Endothelial cell of umbilical vein (primary cell): ENCODE measurements at regions of chr4 and their contacts with region 1.

Region 1: DNA sequence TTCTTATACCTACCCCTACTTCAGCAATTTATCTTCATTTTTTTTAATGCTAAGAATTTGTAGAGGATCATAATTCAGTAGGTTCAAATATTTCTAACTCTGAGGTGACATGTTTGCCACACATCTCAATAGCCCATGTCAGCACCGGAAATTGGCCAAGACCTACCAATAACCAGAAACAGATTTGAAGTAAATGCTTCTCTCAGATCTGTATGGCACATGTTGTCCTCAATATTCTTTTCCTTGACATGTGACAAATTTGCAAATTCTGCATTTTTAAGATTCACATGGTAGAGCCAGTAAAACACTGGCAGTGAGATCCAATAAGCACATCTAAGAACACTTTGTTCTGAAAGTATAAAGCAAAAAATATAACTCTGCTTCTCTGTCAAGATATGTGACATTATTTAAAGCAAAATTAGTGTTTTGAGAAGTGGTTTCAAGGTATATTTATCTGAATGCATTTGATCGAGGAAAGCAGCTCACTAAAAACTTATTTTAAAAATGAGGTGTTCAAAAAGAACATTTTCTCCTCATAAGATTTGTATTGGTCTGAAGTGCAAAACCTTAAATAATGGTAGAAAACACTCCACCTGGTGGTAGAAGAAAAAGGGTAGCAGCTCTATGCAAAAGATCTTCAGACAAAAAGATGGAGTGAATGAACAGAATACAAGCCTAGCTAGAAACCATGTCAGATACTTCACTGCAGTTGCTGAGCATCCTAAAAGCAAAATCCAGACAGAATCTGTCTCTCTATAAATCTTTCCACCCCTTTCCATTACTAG is 513.8 kb upstream of the FAM241A start:
- DNase-seq: peak; percentile 27
- H3K4me3 ChIP-seq: no peak overlapping the region
- H3K27ac ChIP-seq: no peak overlapping the region
- H3K4me1 ChIP-seq: no peaks in the 10 kb centered on the region
- H3K27me3 ChIP-seq: peaks cover 0 to 8% of the 10 kb centered on the region in 2 experiments
- CTCF ChIP-seq: peak; percentile 24 to 48
- POLR2A ChIP-seq: no peak

Region 2: GRCh38 chr4:109998867-109999584 is 1632.4 kb before region 1 on chr4:
- CTCF ChIA-PET with region 1: interaction called, 5 read pairs
- POLR2A ChIA-PET with region 1: no interaction called
- dilution Hi-C with region 1: no loop called
- intact Hi-C with region 1: loop called (anchors 2 kb)
- DNase-seq: peak; percentile 59
- H3K4me3 ChIP-seq: no peak overlapping the region
- H3K27ac ChIP-seq: no peak overlapping the region
- H3K4me1 ChIP-seq: no peaks in the 10 kb centered on the region
- H3K27me3 ChIP-seq: peaks cover 11 to 16% of the 10 kb centered on the region in 2 experiments
- CTCF ChIP-seq: peak; percentile 39 to 44
- POLR2A ChIP-seq: no peak

Region 3: DNA sequence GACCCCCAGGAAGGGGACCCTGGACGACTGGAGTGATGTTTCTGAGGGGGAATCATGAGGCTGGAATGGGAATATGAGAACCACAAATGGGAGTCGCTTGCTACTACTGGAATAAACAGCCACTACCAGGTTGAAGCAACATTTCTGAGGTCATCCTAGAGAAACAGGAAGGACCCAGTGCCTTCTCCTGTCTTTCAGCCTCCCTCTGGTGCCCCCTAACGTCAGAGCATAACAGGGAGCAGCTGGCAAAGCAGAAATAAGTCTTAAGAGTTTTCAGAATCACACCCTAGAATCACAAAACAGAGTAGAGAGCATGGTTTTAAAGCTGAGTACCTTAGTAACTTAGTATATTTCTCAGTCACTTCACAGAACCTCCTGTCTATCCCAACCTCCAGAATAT is 660.8 kb before region 1 on chr4:
- CTCF ChIA-PET with region 1: no interaction called
- POLR2A ChIA-PET with region 1: no interaction called
- dilution Hi-C with region 1: no loop called
- intact Hi-C with region 1: loop called (anchors 2 kb)
- DNase-seq: peak; percentile 6
- H3K4me3 ChIP-seq: no peak overlapping the region
- H3K27ac ChIP-seq: no peak overlapping the region
- H3K4me1 ChIP-seq: no peaks in the 10 kb centered on the region
- H3K27me3 ChIP-seq: peaks cover 0 to 4% of the 10 kb centered on the region in 2 experiments
- CTCF ChIP-seq: peak; percentile 30 to 44
- POLR2A ChIP-seq: no peak

Region 4: DNA sequence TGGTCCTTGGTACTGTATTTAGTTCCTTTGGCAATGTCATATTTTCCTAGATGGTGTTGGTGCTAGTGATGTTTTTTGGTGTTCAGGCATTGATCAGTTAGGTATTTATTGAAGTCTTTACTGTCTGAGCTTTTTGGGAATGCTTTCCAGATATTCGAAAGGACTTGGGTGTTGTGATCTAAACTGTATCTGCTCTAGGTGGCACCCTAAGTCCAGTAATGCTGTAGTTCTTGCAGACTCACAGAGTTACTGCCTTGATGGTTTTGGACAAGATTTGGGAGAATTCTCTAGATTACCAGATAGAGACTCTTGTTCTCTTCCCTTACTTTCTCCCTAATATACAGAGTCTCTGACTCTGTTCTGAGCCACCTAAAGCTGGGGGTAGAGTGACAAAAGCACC is 495.0 kb before region 1 on chr4:
- CTCF ChIA-PET with region 1: interaction called, 36 read pairs
- POLR2A ChIA-PET with region 1: no interaction called
- dilution Hi-C with region 1: no loop called
- intact Hi-C with region 1: loop called (anchors 10 kb)
- DNase-seq: peak; percentile 19
- H3K4me3 ChIP-seq: no peak overlapping the region
- H3K27ac ChIP-seq: no peak overlapping the region
- H3K4me1 ChIP-seq: no peaks in the 10 kb centered on the region
- H3K27me3 ChIP-seq: no peaks in the 10 kb centered on the region
- CTCF ChIP-seq: peak in 1 of 2 donors; percentile 11
- POLR2A ChIP-seq: no peak

Region 5: GRCh38 chr4:111283061-111283677 is 348.2 kb before region 1 on chr4:
- CTCF ChIA-PET with region 1: interaction called, 25 read pairs
- POLR2A ChIA-PET with region 1: no interaction called
- dilution Hi-C with region 1: no loop called
- intact Hi-C with region 1: loop called (anchors 1 kb)
- DNase-seq: peak; percentile 58
- H3K4me3 ChIP-seq: no peak overlapping the region
- H3K27ac ChIP-seq: no peak overlapping the region
- H3K4me1 ChIP-seq: no peaks in the 10 kb centered on the region
- H3K27me3 ChIP-seq: no peaks in the 10 kb centered on the region
- CTCF ChIP-seq: peak; percentile 77 to 85
- POLR2A ChIP-seq: no peak

Region 6: DNA sequence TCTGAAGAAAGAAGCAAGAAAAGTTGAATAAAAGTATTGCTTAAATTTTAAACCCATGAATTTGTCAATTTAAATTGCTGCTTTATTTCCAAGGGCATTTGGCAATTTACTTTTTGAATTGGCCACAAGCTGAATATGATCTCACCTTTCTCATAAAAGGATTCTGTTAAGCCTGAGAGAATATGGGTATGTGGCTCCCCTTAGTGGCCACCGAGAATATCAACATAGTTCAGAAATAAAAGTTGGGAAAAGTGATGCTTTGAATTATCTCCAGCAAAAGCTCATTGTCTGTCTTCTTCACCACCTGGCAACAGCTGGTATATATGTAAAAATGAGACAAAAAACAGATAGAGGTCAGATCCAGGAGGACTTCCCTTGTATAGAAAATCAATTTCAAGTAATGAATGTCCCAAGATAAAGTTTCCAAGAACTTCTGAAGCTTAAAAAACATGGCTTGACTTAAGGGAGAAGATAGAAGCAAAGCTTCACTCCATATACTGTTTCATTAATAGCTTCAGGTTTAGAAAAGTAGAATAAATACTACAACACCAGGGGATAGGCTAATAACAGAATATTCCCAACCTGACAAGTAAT is 223.2 kb after region 1 on chr4:
- CTCF ChIA-PET with region 1: interaction called, 14 read pairs
- POLR2A ChIA-PET with region 1: no interaction called
- dilution Hi-C with region 1: no loop called
- intact Hi-C with region 1: no loop called
- DNase-seq: peak; percentile 39
- H3K4me3 ChIP-seq: no peak overlapping the region
- H3K27ac ChIP-seq: no peak overlapping the region
- H3K4me1 ChIP-seq: no peaks in the 10 kb centered on the region
- H3K27me3 ChIP-seq: peaks cover 0 to 8% of the 10 kb centered on the region in 2 experiments
- CTCF ChIP-seq: peak; percentile 34 to 49
- POLR2A ChIP-seq: no peak